Activated B cell treated with CpG ODN at 0.5 μM for 24 hours (primary cell): ENCODE measurements at regions of chr15 and their contacts with region 1.

Region 1: GRCh38 chr15:55290528-55291057 is 980 bp upstream of the RAB27A start:
- DNase-seq: peak; percentile 75
- ATAC-seq: peak; percentile 81
- H3K4me3 Mint-ChIP-seq: peak overlapping the region; percentile 89
- H3K27ac Mint-ChIP-seq: peak overlapping the region; percentile 83
- H3K4me1 Mint-ChIP-seq: peaks cover 22% of the 10 kb centered on the region
- H3K27me3 Mint-ChIP-seq: no peaks in the 10 kb centered on the region
- CTCF ChIP-seq: peak; percentile 78

Region 2: GRCh38 chr15:53808058-53808706 is 1482.4 kb before region 1 on chr15:
- CTCF ChIA-PET with region 1: no interaction called
- POLR2A ChIA-PET with region 1: no interaction called
- intact Hi-C with region 1: loop called (anchors 1 kb)
- DNase-seq: no peak
- ATAC-seq: no peak
- H3K4me3 Mint-ChIP-seq: no peak overlapping the region
- H3K27ac Mint-ChIP-seq: no peak overlapping the region
- H3K4me1 Mint-ChIP-seq: no peaks in the 10 kb centered on the region
- H3K27me3 Mint-ChIP-seq: no peaks in the 10 kb centered on the region
- CTCF ChIP-seq: no peak

Region 3: DNA sequence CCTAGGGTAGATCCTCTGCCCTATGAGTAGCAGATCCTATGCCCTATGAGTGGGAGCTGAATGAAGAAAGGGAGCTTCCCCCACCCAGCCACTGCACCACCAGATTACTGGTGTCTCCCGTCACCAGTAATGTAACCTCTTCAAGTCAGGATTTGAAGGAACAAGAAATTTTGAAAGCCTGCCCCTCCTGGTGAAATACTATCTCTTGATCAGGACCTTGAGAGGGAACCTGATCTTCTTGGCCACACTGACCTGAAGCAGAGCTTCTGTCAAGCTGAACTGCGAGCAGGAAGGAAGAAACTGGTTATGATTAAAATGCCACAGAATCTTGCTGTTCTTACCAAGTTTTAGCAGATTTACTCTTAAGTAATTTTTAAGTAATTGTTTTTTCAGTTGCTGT is 156.6 kb before region 1 on chr15:
- CTCF ChIA-PET with region 1: no interaction called
- POLR2A ChIA-PET with region 1: no interaction called
- intact Hi-C with region 1: no loop called
- DNase-seq: no peak
- ATAC-seq: no peak
- H3K4me3 Mint-ChIP-seq: no peak overlapping the region
- H3K27ac Mint-ChIP-seq: no peak overlapping the region
- H3K4me1 Mint-ChIP-seq: no peaks in the 10 kb centered on the region
- H3K27me3 Mint-ChIP-seq: peaks cover 22% of the 10 kb centered on the region
- CTCF ChIP-seq: no peak

Region 4: GRCh38 chr15:55196458-55197361 is 93.9 kb before region 1 on chr15 and contains the start of gene RSL24D1:
- CTCF ChIA-PET with region 1: interaction called, 6 read pairs
- POLR2A ChIA-PET with region 1: interaction called, 3 read pairs
- intact Hi-C with region 1: loop called (anchors 1 kb)
- DNase-seq: peak; percentile 84
- ATAC-seq: peak; percentile 95
- H3K4me3 Mint-ChIP-seq: no peak within 1 kb of the TSS
- H3K27ac Mint-ChIP-seq: no peak within 1 kb of the TSS
- H3K4me1 Mint-ChIP-seq: peaks cover 9% of the 10 kb centered on the region
- H3K27me3 Mint-ChIP-seq: no peaks in the 10 kb centered on the region
- CTCF ChIP-seq: no peak
- total RNA-seq, gene RSL24D1: 90.0 and 99.5 TPM in 2 replicates

Region 5: DNA sequence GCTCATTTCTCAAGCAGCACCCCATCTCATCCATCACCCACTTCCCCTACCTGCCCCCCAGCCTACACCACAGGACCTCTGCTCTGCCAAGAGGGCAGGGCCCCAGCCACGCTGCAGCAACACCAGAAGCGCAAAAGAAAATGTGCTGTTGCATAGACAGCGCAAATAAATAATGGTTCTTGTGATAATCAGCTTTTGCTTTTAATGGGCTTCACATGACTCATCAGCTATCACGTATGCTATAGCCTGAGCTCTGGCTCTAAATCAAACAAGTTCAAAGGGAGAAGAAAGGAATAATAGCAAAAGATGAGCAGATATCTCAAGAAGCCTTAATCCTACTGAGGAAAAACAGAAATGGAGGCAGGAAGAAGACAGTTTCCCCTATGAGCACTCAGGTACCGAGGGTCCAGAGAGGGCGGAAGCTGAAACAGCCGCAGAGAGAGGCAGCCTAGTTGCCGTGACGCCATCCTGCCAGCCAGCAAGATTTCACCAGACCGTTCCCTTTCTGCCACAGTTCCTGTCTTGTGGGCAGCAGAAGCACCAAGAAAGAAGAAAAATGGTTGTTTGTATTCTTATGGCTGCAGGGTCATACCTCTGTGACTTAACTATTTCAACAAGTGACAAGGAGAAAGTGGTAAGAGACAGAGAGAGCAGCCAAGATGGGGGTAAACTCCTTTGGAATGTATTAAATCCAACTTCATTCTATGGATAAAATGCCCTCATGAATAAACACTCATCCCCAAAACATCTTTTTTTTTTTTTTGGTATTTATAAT is 23.0 kb before region 1 on chr15:
- CTCF ChIA-PET with region 1: no interaction called
- POLR2A ChIA-PET with region 1: interaction called, 3 read pairs
- intact Hi-C with region 1: loop called (anchors 1 kb)
- DNase-seq: peak; percentile 39
- ATAC-seq: peak; percentile 98
- H3K4me3 Mint-ChIP-seq: peak overlapping the region; percentile 82
- H3K27ac Mint-ChIP-seq: peak overlapping the region; percentile 96
- H3K4me1 Mint-ChIP-seq: peaks cover 26% of the 10 kb centered on the region
- H3K27me3 Mint-ChIP-seq: no peaks in the 10 kb centered on the region
- CTCF ChIP-seq: no peak

Region 6: DNA sequence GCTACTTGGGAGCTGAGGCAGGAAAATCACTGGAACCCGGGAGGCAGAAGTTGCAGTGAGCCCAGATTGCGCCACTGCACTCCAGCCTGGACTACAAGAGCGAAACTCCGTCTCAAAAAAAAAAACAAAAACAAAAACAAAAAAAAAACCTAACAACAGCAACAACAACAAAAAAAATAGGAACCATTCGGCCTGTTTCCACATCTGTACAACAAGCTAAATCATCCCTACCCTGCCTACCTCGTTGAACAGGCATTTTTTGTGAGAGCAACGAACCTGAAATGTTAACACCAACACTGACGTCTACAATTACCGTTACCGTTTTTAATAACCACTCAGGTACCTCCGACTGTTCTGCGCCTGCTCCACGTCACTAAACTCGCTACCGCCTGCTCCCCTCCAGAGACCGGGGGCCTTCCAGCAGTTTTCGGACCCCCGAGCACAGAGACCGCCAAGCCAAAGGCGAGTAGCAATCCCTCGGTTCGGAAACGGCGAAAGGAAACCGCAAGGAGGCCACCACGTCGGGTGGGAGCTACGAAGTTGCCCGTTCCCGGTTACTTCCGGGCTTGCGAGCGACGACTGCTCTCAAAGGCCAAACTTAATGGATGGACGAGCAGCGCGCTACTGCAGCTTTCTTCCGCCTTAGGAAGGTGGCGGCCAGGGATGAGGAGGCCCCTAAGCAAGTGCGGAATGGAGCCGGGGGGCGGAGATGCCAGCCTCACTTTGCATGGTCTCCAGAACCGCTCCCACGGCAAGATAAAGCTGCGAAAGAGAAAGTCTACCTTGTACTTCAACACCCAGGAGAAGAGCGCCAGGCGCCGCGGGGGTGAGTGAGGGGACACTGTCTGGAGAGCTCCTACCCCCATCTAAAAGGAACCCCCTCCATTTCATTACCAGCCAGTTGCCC is 28.2 kb after region 1 on chr15 and contains the starts of genes PIGB and PIGBOS1:
- CTCF ChIA-PET with region 1: no interaction called
- POLR2A ChIA-PET with region 1: interaction called, 8 read pairs
- intact Hi-C with region 1: loop called (anchors 1 kb)
- DNase-seq: peak; percentile 75
- ATAC-seq: peak; percentile 86
- H3K4me3 Mint-ChIP-seq: peak within 1 kb of the TSS; percentile 99
- H3K27ac Mint-ChIP-seq: peak within 1 kb of the TSS; percentile 99
- H3K4me1 Mint-ChIP-seq: peaks cover 68% of the 10 kb centered on the region
- H3K27me3 Mint-ChIP-seq: no peaks in the 10 kb centered on the region
- CTCF ChIP-seq: no peak
- total RNA-seq, gene PIGB: 29.8 and 31.2 TPM in 2 replicates
- total RNA-seq, gene PIGBOS1: 10.7 and 12.6 TPM in 2 replicates